ENCODE measurements at regions of chr5 and their contacts with region 1.

Region 1: GRCh38 chr5:171342362-171343111 is 33.5 kb downstream of the TLX3 start:
- DNase-seq: peak; percentile 44
- ATAC-seq: peak; percentile 98
- H3K4me3 Mint-ChIP-seq: no peak overlapping the region
- H3K27ac Mint-ChIP-seq: peak overlapping the region; percentile 74; the same call in 1 of the 2 replicates
- H3K4me1 Mint-ChIP-seq: no peaks in the 10 kb centered on the region
- H3K27me3 Mint-ChIP-seq: peaks cover 10% of the 10 kb centered on the region
- CTCF ChIP-seq: peak; percentile 60

Region 2: DNA sequence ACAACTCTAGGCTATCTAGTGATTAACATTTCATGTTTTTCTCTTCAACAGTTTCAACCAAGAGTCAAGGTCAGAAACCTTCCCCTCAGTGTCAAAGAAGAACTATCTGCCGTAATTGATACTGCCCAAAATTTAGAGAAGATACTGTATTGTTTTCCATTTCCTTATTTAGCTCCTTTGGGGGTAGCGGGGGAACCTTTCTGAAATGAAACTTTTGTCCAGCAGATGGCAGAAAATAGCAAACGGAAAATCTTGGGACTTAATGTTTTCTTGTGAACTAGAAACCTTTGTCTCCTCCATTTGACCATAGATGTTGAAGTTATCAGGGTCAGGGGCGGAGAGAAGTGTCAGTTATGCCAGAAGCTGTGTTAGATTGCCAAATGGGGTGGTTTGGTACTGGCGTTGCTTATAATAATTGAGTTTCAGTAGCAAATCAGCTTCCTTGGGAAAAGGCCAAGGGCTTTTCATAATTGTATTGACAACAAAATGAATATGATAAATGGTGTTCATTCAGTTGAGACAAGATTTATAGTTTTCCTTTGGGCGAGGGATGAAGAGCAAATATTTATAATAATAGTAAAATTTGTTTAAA is 135.2 kb before region 1 on chr5:
- CTCF ChIA-PET with region 1: interaction called, 28 read pairs
- POLR2A ChIA-PET with region 1: interaction called, 4 read pairs
- DNase-seq: no peak
- ATAC-seq: peak; percentile 43
- H3K4me3 Mint-ChIP-seq: no peak overlapping the region
- H3K27ac Mint-ChIP-seq: no peak overlapping the region
- H3K4me1 Mint-ChIP-seq: peaks cover 10% of the 10 kb centered on the region
- H3K27me3 Mint-ChIP-seq: no peaks in the 10 kb centered on the region
- CTCF ChIP-seq: no peak

Region 3: GRCh38 chr5:171246231-171246630 is 96.3 kb before region 1 on chr5:
- CTCF ChIA-PET with region 1: no interaction called
- POLR2A ChIA-PET with region 1: no interaction called
- DNase-seq: no peak
- ATAC-seq: no peak
- H3K4me3 Mint-ChIP-seq: no peak overlapping the region
- H3K27ac Mint-ChIP-seq: no peak overlapping the region
- H3K4me1 Mint-ChIP-seq: no peaks in the 10 kb centered on the region
- H3K27me3 Mint-ChIP-seq: no peaks in the 10 kb centered on the region
- CTCF ChIP-seq: no peak

Region 4: DNA sequence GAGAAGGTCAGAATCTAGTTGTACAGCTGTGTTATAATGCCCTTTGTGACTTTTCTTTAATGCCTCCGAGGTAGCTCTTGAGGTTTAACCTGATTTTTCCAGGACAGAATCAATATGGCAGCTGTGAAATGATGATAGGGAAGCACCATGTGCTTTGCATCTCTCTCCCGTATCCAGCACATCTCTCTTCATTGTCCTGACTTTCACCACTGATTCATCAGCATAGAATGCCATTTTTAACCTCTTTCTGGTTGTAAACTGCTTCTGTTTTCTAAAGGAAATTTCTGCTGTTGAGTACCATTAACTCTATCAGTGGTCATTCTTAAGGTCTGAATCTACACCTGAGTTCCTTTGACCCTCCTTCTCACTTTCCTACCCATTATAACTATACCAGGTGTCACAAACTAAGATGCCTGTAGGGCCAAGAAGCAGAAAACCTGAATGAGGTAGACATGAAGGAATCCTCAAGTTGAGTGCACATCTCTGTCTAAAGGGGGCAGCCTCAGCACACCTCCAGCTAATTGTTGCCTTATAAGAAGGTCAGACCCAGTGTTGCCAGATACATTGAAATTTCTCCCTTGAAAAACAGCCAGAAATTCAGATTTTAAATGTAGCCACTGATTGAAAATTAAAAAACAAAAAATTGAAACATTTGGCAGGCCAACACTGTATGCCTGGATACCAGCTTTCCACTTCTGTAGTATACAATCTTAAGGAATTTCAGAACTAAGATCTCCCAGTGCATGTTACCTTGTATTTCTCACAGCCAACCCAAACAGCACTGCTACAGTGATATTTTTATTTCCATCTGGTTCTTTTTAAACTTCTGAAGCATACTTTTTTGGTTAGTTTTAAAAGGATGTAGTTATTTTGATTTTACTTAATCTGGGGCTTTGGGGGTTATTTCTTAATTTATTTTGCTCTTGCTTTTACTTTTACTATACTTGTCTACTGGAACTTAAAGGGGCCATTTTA is 69.3 kb before region 1 on chr5:
- CTCF ChIA-PET with region 1: interaction called, 17 read pairs
- POLR2A ChIA-PET with region 1: no interaction called
- DNase-seq: peak; percentile 41
- ATAC-seq: peak; percentile 99
- H3K4me3 Mint-ChIP-seq: no peak overlapping the region
- H3K27ac Mint-ChIP-seq: no peak overlapping the region
- H3K4me1 Mint-ChIP-seq: peaks cover 5% of the 10 kb centered on the region
- H3K27me3 Mint-ChIP-seq: no peaks in the 10 kb centered on the region
- CTCF ChIP-seq: no peak

Region 5: GRCh38 chr5:171310212-171310818 is 32.2 kb before region 1 on chr5:
- CTCF ChIA-PET with region 1: interaction called, 14 read pairs
- POLR2A ChIA-PET with region 1: no interaction called
- DNase-seq: peak; percentile 80
- ATAC-seq: no peak; the same call in 1 of the 2 replicates
- H3K4me3 Mint-ChIP-seq: peak overlapping the region; percentile 54
- H3K27ac Mint-ChIP-seq: no peak overlapping the region
- H3K4me1 Mint-ChIP-seq: peaks cover 43% of the 10 kb centered on the region
- H3K27me3 Mint-ChIP-seq: peaks cover 98% of the 10 kb centered on the region
- CTCF ChIP-seq: peak; percentile 66

Region 6: DNA sequence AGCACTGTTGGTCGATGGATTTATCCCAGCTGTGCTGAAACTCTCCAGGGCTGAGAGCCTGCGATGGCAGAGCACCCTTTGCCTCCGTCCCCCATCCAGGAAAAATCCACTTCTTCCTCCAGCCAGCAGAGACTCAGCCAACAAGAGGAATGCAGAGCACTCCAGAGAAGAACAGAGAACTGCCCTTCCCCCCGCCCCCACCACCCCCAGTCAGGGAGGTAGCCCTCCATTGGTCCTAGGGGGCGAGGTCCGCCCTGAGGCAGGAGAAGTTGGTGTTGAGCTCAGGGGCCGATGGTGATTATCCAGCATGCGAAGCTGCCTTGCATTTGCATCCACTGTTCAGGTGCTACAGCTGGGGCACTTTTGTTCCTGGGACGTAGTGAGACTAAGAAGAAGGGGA is 24.5 kb before region 1 on chr5:
- CTCF ChIA-PET with region 1: interaction called, 17 read pairs
- POLR2A ChIA-PET with region 1: no interaction called
- DNase-seq: peak; percentile 69
- ATAC-seq: peak; percentile 61
- H3K4me3 Mint-ChIP-seq: peak overlapping the region; percentile 40
- H3K27ac Mint-ChIP-seq: no peak overlapping the region
- H3K4me1 Mint-ChIP-seq: peaks cover 60% of the 10 kb centered on the region
- H3K27me3 Mint-ChIP-seq: peaks cover 100% of the 10 kb centered on the region
- CTCF ChIP-seq: no peak

Region 7: GRCh38 chr5:171323806-171324633 is 18.5 kb before region 1 on chr5:
- CTCF ChIA-PET with region 1: interaction called, 17 read pairs
- POLR2A ChIA-PET with region 1: no interaction called
- DNase-seq: no peak
- ATAC-seq: peak; percentile 32; the same call in 1 of the 2 replicates
- H3K4me3 Mint-ChIP-seq: no peak overlapping the region
- H3K27ac Mint-ChIP-seq: no peak overlapping the region
- H3K4me1 Mint-ChIP-seq: peaks cover 33% of the 10 kb centered on the region
- H3K27me3 Mint-ChIP-seq: peaks cover 89% of the 10 kb centered on the region
- CTCF ChIP-seq: no peak

Region 8: GRCh38 chr5:171437286-171437821 is 94.8 kb after region 1 on chr5:
- CTCF ChIA-PET with region 1: no interaction called
- POLR2A ChIA-PET with region 1: interaction called, 10 read pairs
- DNase-seq: peak; percentile 30
- ATAC-seq: peak; percentile 63
- H3K4me3 Mint-ChIP-seq: no peak overlapping the region
- H3K27ac Mint-ChIP-seq: no peak overlapping the region
- H3K4me1 Mint-ChIP-seq: peaks cover 42% of the 10 kb centered on the region
- H3K27me3 Mint-ChIP-seq: no peaks in the 10 kb centered on the region
- CTCF ChIP-seq: no peak

Region 9: GRCh38 chr5:171701100-171701541 is 358.6 kb after region 1 on chr5:
- CTCF ChIA-PET with region 1: no interaction called
- POLR2A ChIA-PET with region 1: no interaction called
- DNase-seq: no peak
- ATAC-seq: no peak
- H3K4me3 Mint-ChIP-seq: no peak overlapping the region
- H3K27ac Mint-ChIP-seq: no peak overlapping the region
- H3K4me1 Mint-ChIP-seq: no peaks in the 10 kb centered on the region
- H3K27me3 Mint-ChIP-seq: no peaks in the 10 kb centered on the region
- CTCF ChIP-seq: no peak